Breast epithelium (tissue), 4 donors: ENCODE measurements at regions of chr12 and their contacts with region 1.

Region 1: DNA sequence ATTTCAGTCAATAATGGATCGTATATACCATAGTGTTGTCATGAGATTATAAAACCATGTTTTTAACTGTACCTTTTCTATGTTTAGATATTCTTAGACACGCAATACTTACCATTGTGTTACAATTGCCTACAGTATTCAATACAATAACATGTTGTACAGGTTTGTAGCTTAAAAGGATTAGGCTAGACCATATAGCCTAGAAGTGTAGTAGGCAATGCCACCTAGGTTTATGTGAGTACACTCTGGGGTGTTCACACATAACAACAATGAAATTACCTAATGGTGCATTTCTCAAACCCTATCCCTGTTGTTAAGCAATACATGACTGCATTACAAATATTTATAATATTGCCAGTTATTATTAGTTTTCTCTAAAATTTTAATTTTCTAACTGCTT is 144.2 kb downstream of the KCNC2 start:
- DNase-seq: no peak
- H3K4me3 ChIP-seq: no peak overlapping the region
- H3K27ac ChIP-seq: no peak overlapping the region
- H3K4me1 ChIP-seq: no peaks in the 10 kb centered on the region
- H3K27me3 ChIP-seq: no peaks in the 10 kb centered on the region
- CTCF ChIP-seq: no peak
- POLR2A ChIP-seq: no peak

Region 2: DNA sequence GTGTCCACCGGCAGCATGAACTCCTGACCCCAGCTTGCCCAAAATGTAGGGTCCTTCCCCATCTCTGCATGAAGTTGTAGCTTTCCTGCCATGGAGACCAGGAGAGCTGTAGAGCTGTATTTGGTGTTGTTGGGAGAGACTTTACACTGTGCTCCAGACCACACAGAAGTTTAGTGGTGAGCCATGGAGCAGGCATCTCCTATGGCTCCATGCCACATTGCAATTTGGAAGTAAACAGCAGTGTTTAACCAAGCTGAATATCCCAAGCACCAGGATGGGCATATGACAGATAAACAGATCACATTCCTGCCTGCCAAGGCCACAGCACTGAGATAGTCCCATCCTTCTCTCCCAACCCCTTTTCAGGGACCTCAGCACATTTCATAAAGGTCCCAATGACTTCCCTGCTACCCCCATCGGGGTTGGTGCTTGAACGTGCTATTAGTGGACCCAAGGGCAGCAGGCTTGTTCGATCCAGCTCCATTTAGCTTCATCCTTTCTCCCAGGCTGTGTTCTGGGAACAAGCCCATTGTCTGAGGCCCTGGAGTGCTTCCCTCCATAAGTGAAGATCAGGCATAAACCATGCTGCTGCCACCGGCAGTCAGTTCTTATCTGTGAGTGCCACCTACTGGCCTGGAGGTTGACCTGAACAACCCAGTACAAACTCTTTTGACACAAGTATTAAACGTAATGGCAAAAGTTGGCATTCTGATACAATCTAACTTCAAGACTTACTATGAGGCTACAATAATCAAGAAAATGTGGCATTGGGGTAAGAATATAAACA is 700.1 kb before region 1 on chr12:
- intact Hi-C with region 1: loop called (anchors 10 kb)
- DNase-seq: no peak
- H3K4me3 ChIP-seq: no peak overlapping the region
- H3K27ac ChIP-seq: no peak overlapping the region
- H3K4me1 ChIP-seq: no peaks in the 10 kb centered on the region
- H3K27me3 ChIP-seq: no peaks in the 10 kb centered on the region
- CTCF ChIP-seq: peak in 1 of 3 donors; percentile 9
- POLR2A ChIP-seq: no peak